GM12878 (cell line): ENCODE measurements at regions of chr2 and their contacts with region 1.

Region 1: GRCh38 chr2:176491172-176491904 is 222.1 kb downstream of the MTX2 start:
- DNase-seq: peak; percentile 67
- ATAC-seq: peak; percentile 89
- H3K4me3 ChIP-seq: no peak overlapping the region
- H3K27ac ChIP-seq: no peak overlapping the region
- H3K4me1 ChIP-seq: peaks cover 26% of the 10 kb centered on the region
- H3K27me3 ChIP-seq: no peaks in the 10 kb centered on the region; a peak in 1 of 4 replicates
- CTCF ChIP-seq: no peak
- EP300 ChIP-seq: peak in 1 of 2 experiments; percentile 80; a peak in 2 of 4 replicates
- POLR2A ChIP-seq: no peak
- RAD21 ChIP-seq: no peak

Region 2: GRCh38 chr2:176473177-176473576 is 18.2 kb before region 1 on chr2:
- CTCF ChIA-PET with region 1: interaction called, 7 read pairs
- POLR2A ChIA-PET with region 1: interaction called, 3 read pairs
- RAD21 ChIA-PET with region 1: interaction called, 3 read pairs
- SMC1A ChIA-PET with region 1: interaction called, 13 read pairs
- in situ Hi-C with region 1: no loop called
- intact Hi-C with region 1: no loop called
- DNase-seq: no peak
- ATAC-seq: peak; percentile 90
- H3K4me3 ChIP-seq: no peak overlapping the region
- H3K27ac ChIP-seq: no peak overlapping the region
- H3K4me1 ChIP-seq: no peaks in the 10 kb centered on the region; the same call in 1 of the 2 replicates
- H3K27me3 ChIP-seq: no peaks in the 10 kb centered on the region
- CTCF ChIP-seq: no peak
- EP300 ChIP-seq: no peak
- POLR2A ChIP-seq: no peak
- RAD21 ChIP-seq: no peak

Region 3: GRCh38 chr2:176508984-176509740 is 17.8 kb after region 1 on chr2:
- CTCF ChIA-PET with region 1: interaction called, 7 read pairs
- POLR2A ChIA-PET with region 1: interaction called, 3 read pairs
- RAD21 ChIA-PET with region 1: interaction called, 3 read pairs
- SMC1A ChIA-PET with region 1: interaction called, 8 read pairs
- in situ Hi-C with region 1: no loop called
- intact Hi-C with region 1: loop called (anchors 2 kb)
- DNase-seq: peak; percentile 48
- ATAC-seq: peak; percentile 94
- H3K4me3 ChIP-seq: no peak overlapping the region
- H3K27ac ChIP-seq: no peak overlapping the region
- H3K4me1 ChIP-seq: no peaks in the 10 kb centered on the region
- H3K27me3 ChIP-seq: no peaks in the 10 kb centered on the region
- CTCF ChIP-seq: no peak
- EP300 ChIP-seq: peak in 1 of 2 experiments; percentile 73; a peak in 1 of 4 replicates
- POLR2A ChIP-seq: no peak
- RAD21 ChIP-seq: no peak